ENCODE measurements at regions of chr3 and their contacts with region 1.

Region 1: GRCh38 chr3:11719406-11720230 is 75.9 kb upstream of the VGLL4 start:
- DNase-seq: peak; percentile 88
- H3K4me3 Mint-ChIP-seq: peak overlapping the region; percentile 98
- H3K27ac Mint-ChIP-seq: peak overlapping the region; percentile 94
- H3K4me1 Mint-ChIP-seq: peaks cover 13% of the 10 kb centered on the region
- H3K27me3 Mint-ChIP-seq: peaks cover 4% of the 10 kb centered on the region
- CTCF ChIP-seq: no peak

Region 2: GRCh38 chr3:11601446-11602238 is 118.0 kb before region 1 on chr3:
- CTCF ChIA-PET with region 1: no interaction called
- POLR2A ChIA-PET with region 1: interaction called, 13 read pairs
- intact Hi-C with region 1: no loop called
- DNase-seq: no peak
- H3K4me3 Mint-ChIP-seq: peak overlapping the region; percentile 73
- H3K27ac Mint-ChIP-seq: peak overlapping the region; percentile 90
- H3K4me1 Mint-ChIP-seq: peaks cover 32% of the 10 kb centered on the region
- H3K27me3 Mint-ChIP-seq: no peaks in the 10 kb centered on the region
- CTCF ChIP-seq: no peak

Region 3: DNA sequence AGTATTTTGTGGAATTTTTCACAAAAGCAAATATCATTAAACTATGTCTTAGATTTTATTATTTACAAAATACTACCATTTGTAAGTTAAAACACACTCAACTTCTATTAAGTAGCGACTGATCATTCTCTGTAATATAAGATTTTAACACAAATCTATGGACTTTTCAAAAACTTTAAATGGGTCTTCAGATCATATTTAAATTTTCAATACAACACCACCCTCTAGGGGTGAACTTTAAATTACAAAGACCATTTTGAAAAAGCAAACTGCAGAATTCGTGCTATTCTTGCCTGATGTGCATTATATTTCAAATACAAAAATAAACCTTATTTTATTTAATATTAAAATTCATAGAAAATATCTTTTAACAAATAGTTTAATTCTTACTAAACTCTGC is 67.7 kb before region 1 on chr3:
- CTCF ChIA-PET with region 1: interaction called, 4 read pairs
- POLR2A ChIA-PET with region 1: no interaction called
- intact Hi-C with region 1: loop called (anchors 5 kb)
- DNase-seq: peak; percentile 36
- H3K4me3 Mint-ChIP-seq: no peak overlapping the region
- H3K27ac Mint-ChIP-seq: no peak overlapping the region
- H3K4me1 Mint-ChIP-seq: no peaks in the 10 kb centered on the region
- H3K27me3 Mint-ChIP-seq: no peaks in the 10 kb centered on the region
- CTCF ChIP-seq: peak; percentile 46

Region 4: DNA sequence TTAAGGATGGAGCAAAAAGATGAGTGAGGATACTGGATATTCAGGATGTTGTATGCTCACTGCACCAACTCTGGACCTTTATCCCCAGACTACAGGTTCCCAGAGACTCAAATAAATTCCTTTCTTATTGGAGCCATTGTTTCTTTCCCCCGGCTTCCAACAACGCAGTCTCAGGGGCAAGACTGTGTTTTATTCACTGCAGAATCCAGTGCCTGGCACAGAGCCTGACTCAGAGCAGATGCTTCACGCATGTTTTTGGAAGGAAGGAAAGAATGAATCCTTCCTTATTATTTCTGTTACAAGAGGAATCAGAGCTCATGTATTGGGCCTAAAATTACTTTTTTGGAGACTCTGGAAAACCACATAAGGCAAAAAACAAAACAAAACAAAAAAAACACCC is 20.1 kb after region 1 on chr3:
- CTCF ChIA-PET with region 1: no interaction called
- POLR2A ChIA-PET with region 1: no interaction called
- intact Hi-C with region 1: no loop called
- DNase-seq: no peak
- H3K4me3 Mint-ChIP-seq: no peak overlapping the region
- H3K27ac Mint-ChIP-seq: no peak overlapping the region
- H3K4me1 Mint-ChIP-seq: peaks cover 5% of the 10 kb centered on the region
- H3K27me3 Mint-ChIP-seq: no peaks in the 10 kb centered on the region
- CTCF ChIP-seq: no peak

Region 5: DNA sequence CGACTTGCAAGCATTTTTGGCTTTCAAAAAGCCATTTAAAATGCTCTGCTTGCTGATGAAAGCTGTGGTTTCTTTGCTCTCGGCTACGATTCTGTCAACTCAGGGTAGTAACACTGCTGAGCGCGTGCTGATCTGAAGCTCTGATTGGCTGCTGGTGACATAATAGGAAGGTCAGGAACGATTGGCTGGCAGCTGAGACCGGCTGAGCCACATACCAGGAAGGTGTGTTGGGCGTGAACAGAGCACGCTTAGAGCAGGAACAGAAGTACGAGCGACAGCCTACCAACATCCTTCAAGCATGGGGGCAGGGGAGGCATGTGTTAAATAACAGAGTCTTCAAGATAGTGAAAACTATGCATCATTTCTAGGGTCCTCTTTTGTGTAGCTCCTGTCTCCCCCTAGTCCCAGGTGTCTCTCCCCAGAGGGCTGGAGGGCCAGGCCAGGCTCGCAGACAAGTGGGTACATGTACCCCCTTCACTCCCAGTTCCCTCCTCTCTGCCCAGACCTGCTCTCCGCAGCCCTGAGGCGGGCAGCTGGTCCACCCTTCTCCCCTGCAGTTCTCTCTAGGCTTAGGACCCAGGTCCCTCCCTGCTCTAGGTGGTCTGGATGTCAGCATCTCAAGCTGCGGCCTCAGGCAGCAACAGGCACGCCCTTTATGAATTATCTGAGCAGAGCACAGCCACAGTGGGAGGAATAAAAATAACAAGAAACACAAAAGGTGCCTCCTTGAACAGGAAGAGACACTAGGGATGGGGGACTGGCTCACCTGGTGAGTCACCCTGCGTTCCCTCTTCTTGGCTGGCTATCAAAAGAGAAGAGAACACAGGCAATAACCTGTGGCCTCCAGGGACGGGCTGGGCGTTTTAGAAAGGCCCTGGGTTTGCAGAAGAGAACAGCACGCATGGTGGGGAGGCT is 51.1 kb after region 1 on chr3:
- CTCF ChIA-PET with region 1: interaction called, 4 read pairs
- POLR2A ChIA-PET with region 1: interaction called, 72 read pairs
- intact Hi-C with region 1: loop called (anchors 2 kb)
- DNase-seq: peak; percentile 94
- H3K4me3 Mint-ChIP-seq: peak overlapping the region; percentile 50
- H3K27ac Mint-ChIP-seq: peak overlapping the region; percentile 88
- H3K4me1 Mint-ChIP-seq: peaks cover 30% of the 10 kb centered on the region
- H3K27me3 Mint-ChIP-seq: no peaks in the 10 kb centered on the region
- CTCF ChIP-seq: no peak

Measured in MCF 10A (cell line).